ENCODE measurements at regions of chr6 and their contacts with region 1.

Region 1: GRCh38 chr6:89432875-89433251 is at the start of gene ANKRD6:
- DNase-seq: peak; percentile 80 to 85 (median 82)
- ATAC-seq: peak; percentile 97 to 99 (median 99)
- H3K4me3 ChIP-seq: peak within 1 kb of the TSS; percentile 89 to 96 (median 91)
- H3K27ac ChIP-seq: peak within 1 kb of the TSS in 2 of 3 donors; percentile 23 to 40
- H3K4me1 ChIP-seq: peaks cover 0 to 4% (median 0%) of the 10 kb centered on the region in 4 donors
- H3K27me3 ChIP-seq: no peaks in the 10 kb centered on the region
- CTCF ChIP-seq: peak; percentile 82 to 99 (median 93)
- POLR2A ChIP-seq: no peak
- total RNA-seq, gene ANKRD6: 5.3 to 14.8 (median 8.3) TPM

Region 2: DNA sequence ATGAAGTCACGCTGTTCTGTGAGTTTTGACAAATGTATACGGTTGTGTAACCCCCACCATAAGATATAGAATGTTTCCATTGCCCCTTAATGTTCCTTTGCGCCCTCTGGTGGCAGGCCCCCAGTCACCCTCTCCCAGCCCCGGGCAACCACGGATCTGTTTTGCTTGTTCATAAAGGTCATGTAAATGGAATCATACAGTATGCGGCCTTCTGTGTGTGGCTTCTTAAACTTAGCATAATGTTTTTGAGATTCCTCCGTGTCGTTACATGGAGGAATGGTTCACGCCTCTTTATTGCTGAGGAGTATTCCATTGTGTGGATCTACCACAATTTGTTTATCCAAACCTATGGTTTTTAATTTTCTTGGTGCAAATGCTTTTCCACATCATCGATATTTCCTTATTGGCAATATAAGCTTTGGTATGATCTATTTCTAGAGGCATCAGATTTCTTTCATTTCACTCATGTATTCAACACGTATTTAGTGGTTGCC is 177.3 kb after region 1 on chr6:
- intact Hi-C with region 1: loop called (anchors 5 kb)
- DNase-seq: peak; percentile 73 to 79 (median 75)
- ATAC-seq: peak; percentile 87 to 93 (median 90)
- H3K4me3 ChIP-seq: no peak overlapping the region
- H3K27ac ChIP-seq: no peak overlapping the region
- H3K4me1 ChIP-seq: no peaks in the 10 kb centered on the region
- H3K27me3 ChIP-seq: no peaks in the 10 kb centered on the region
- CTCF ChIP-seq: peak; percentile 77 to 94 (median 92)
- POLR2A ChIP-seq: no peak